ENCODE measurements at regions of chr4 and their contacts with region 1.

Region 1: GRCh38 chr4:81412946-81413495 is 58.7 kb downstream of the RASGEF1B start:
- DNase-seq: peak; percentile 53 to 79 (median 70)
- H3K4me3 ChIP-seq: no peak overlapping the region
- H3K4me3 Mint-ChIP-seq: no peak overlapping the region
- H3K27ac ChIP-seq: no peak overlapping the region
- H3K27ac Mint-ChIP-seq: peak overlapping the region in 3 of 7 donors; percentile 13 to 38 (median 26)
- H3K4me1 ChIP-seq: peaks cover 0 to 6% of the 10 kb centered on the region in 2 donors
- H3K4me1 Mint-ChIP-seq: peaks cover 15% of the 10 kb centered on the region
- H3K27me3 ChIP-seq: no peaks in the 10 kb centered on the region
- H3K27me3 Mint-ChIP-seq: peaks cover 0 to 7% (median 2%) of the 10 kb centered on the region in 3 donors
- CTCF ChIP-seq: no peak

Region 2: DNA sequence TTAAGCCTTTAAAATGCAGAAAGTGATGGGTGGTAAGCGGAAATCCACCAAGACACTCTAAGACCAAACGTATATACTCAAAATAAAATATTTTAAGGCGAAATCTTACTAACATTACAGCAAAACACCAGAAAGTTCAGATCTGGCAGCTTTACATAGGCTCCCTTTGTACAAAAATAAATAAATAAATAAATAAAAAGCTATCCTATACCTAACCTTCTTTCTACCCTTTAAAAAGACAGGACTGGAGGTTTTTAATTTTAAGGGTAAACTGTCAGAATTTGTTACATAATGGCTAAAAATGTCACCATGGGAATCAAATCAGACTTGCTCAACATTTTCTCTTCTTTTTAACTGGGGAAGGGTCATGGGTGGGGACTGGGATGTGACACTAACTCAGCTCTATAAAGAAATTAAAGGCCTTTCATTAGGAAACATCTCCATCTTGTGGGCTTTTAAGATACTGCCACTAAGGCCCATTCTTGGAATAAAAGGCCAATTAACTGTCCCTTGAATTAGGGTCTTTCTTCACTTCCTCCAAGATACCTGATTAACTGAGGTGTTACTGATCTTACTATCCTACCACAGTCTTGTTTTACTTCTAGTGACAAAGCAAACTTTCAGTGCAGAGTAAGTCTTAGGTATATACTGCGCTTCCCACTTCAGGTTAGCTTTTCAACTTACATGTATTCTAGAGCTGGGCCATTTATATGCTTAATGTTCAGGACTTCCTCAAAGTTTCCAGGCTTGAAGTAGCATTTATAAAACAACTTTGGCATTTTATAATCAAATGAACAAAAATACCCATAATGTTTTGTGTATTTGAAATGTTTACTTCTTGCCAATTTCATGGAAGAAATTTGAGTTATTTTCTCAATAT is 947.5 kb after region 1 on chr4:
- intact Hi-C with region 1: loop called in 1 of 2 experiments (anchors 10 kb)
- DNase-seq: peak; percentile 23 to 57 (median 54)
- H3K4me3 ChIP-seq: no peak overlapping the region
- H3K4me3 Mint-ChIP-seq: no peak overlapping the region
- H3K27ac ChIP-seq: peak overlapping the region in 1 of 2 donors; percentile 55
- H3K27ac Mint-ChIP-seq: peak overlapping the region; percentile 10 to 91 (median 68)
- H3K4me1 ChIP-seq: peaks cover 25 to 43% of the 10 kb centered on the region in 2 donors
- H3K4me1 Mint-ChIP-seq: peaks cover 53% of the 10 kb centered on the region
- H3K27me3 ChIP-seq: no peaks in the 10 kb centered on the region
- H3K27me3 Mint-ChIP-seq: no peaks in the 10 kb centered on the region
- CTCF ChIP-seq: peak; percentile 86